Sigmoid colon (tissue), 7 donors: ENCODE measurements at regions of chr17 and their contacts with region 1.

Region 1: DNA sequence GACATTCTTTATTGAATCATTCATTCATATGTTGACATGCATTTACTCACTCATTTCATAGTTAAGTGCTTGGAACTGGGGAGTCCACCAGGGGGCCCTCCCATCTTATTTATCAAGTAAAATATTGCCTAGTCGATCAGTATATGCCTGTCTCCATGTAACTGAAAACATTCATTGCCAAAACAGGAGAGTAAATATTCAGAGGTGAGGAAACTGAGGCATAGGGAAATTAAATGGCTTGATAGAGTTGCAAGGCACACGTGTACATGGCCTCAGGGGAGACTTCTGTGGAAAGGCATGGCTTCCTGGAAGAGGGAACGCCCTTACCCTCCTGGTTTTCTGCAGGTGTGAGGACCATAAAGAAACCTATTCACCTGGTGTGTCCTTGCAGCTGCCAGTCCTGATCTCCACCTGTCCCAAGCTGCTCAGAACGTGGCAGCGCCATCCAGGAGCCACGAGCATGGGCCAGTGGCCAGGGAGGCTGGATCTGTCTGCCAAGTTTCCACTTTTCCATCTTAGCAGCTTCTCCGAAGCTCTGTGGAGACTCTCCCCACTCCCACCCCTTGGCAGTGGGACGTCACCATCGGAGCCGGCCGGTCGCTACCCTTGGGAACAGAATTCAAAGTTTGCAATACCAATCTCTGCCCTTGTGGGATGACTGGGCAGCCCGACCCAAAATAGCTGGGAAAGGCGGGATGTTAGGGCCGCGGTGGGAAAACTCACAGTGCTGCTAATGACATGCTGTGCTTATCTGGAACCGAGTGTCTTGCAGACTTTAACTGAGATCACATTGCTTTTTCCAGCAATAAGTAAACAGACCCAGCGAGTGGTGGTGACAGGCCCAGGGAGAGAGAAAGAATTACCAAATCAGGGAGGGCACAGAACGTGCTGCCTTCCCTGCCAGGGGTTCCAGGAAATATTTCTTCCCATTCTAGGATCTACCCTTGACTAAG is 4.1 kb upstream of the C1QTNF1 start:
- DNase-seq: peak; percentile 85
- H3K4me3 ChIP-seq: peak overlapping the region in 3 of 4 donors; percentile 8 to 16 (median 14)
- H3K27ac ChIP-seq: peak overlapping the region; percentile 63 to 81 (median 64)
- H3K4me1 ChIP-seq: peaks cover 0 to 30% (median 28%) of the 10 kb centered on the region in 4 donors
- H3K27me3 ChIP-seq: peaks cover 0 to 3% (median 0%) of the 10 kb centered on the region in 3 donors
- CTCF ChIP-seq: peak; percentile 21 to 83 (median 68)
- EP300 ChIP-seq: peak in 2 of 4 donors; percentile 24 to 62
- POLR2A ChIP-seq: no peak

Region 2: DNA sequence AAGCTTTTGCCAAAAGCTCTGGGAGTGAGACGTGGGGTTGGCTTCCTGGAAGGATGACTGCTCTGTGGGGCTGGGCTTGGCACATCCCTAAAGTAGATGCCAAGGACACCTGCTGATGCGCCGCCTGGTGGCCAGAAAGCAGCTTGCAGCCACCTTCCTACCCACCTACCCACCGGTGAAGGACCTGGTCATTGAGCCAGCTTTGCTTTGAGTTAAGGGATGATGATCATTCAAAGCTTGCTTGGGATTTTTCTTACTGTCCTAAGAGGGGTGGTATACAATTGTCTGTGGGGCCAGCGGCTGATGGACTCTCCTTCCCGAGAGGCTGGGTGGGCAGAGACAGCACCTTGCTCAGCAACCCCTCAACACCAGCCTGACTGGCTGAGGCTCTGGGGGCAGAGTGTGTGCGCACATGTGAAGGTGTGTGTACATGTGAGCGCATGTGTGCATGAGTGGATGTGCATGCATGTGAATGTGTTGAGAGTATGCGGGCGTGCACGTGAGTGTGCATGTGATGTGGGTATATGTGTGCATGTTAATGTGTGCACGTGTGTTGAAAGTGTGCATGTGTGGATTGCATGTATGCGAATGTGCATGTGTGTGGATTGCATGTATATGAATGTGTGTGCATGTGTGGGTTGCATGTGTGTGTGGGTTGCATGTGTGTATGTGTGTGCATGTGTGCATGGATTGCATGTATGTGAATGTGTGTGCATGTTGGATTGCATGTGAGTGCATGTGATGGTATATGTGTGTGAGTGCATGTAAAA is 22.7 kb after region 1 on chr17:
- intact Hi-C with region 1: loop called (anchors 1 kb)
- DNase-seq: peak; percentile 83
- H3K4me3 ChIP-seq: no peak overlapping the region
- H3K27ac ChIP-seq: no peak overlapping the region
- H3K4me1 ChIP-seq: peaks cover 0 to 15% (median 7%) of the 10 kb centered on the region in 4 donors
- H3K27me3 ChIP-seq: no peaks in the 10 kb centered on the region
- CTCF ChIP-seq: peak; percentile 65 to 91 (median 88)
- EP300 ChIP-seq: no peak
- POLR2A ChIP-seq: no peak

Region 3: GRCh38 chr17:79053251-79053925 is 33.5 kb after region 1 on chr17:
- intact Hi-C with region 1: no loop called
- DNase-seq: peak; percentile 46
- H3K4me3 ChIP-seq: no peak overlapping the region
- H3K27ac ChIP-seq: no peak overlapping the region
- H3K4me1 ChIP-seq: no peaks in the 10 kb centered on the region
- H3K27me3 ChIP-seq: no peaks in the 10 kb centered on the region
- CTCF ChIP-seq: no peak
- EP300 ChIP-seq: no peak
- POLR2A ChIP-seq: no peak

Region 4: GRCh38 chr17:79074650-79075445 is 54.9 kb after region 1 on chr17 and contains the start of gene ENGASE:
- intact Hi-C with region 1: loop called (anchors 5 kb)
- DNase-seq: peak; percentile 97
- H3K4me3 ChIP-seq: peak within 1 kb of the TSS; percentile 54 to 94 (median 92)
- H3K27ac ChIP-seq: peak within 1 kb of the TSS; percentile 83 to 92 (median 88)
- H3K4me1 ChIP-seq: peaks cover 0 to 25% (median 20%) of the 10 kb centered on the region in 4 donors
- H3K27me3 ChIP-seq: no peaks in the 10 kb centered on the region
- CTCF ChIP-seq: no peak
- EP300 ChIP-seq: no peak
- POLR2A ChIP-seq: no peak
- total RNA-seq, gene ENGASE: 14.3 to 26.3 (median 14.4) TPM